AG04450 (cell line): ENCODE measurements at regions of chr19 and their contacts with region 1.

Region 1: GRCh38 chr19:19361075-19361594 is 40.5 kb downstream of the MAU2 start:
- DNase-seq: peak; percentile 58
- H3K4me3 ChIP-seq: no peak overlapping the region
- H3K27ac ChIP-seq: no peak overlapping the region
- H3K27me3 ChIP-seq: no peaks in the 10 kb centered on the region
- CTCF ChIP-seq: peak; percentile 77

Region 2: DNA sequence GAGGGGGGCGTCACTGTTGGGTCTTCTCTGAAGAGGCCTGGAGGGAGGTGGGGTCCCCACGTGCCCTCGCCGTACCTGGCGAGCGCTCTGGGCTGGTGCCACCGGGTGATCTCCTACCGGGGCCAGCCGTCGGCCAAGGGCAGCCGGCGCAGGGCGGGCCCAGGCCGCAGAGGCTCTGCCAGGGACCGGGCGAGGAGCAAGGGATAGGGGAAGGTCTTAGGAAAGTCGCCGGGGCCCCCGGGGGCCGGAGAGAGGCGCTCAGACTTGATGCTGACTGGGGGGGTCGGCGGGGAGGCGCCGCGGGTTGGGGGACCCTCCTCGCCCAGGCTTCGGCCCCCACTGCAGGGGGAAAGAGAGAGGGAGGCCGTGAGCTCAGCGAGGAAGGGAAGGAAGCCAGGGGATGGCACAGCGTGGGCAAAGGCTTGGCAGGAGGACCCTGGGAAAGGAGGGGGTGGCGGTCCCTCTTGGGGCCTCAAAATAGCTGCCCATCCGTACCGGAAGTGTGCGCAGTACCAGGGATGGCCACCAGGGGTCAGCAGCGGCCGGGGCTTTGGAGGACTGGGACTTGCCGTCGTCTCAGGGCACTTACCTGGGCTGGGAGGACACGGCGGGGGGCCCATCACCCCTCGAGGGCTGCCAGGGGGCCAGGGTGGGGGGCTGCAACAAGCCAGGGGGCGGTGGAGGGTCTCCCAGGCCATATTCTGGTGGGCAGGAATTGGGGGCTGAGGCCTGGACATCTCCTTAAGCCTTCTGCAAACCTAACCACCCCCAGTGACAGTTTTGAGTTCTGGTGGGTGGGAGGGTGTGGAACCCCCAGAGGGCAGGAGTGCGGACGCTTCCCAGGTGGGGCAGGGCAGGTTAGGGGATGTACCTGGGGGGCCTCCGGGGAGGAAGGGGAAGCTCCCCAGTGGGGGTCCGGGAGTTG is 215.2 kb before region 1 on chr19:
- CTCF ChIA-PET with region 1: no interaction called
- POLR2A ChIA-PET with region 1: no interaction called
- DNase-seq: peak; percentile 29
- H3K4me3 ChIP-seq: no peak overlapping the region
- H3K27ac ChIP-seq: no peak overlapping the region
- H3K27me3 ChIP-seq: peaks cover 4% of the 10 kb centered on the region
- CTCF ChIP-seq: peak; percentile 91

Region 3: DNA sequence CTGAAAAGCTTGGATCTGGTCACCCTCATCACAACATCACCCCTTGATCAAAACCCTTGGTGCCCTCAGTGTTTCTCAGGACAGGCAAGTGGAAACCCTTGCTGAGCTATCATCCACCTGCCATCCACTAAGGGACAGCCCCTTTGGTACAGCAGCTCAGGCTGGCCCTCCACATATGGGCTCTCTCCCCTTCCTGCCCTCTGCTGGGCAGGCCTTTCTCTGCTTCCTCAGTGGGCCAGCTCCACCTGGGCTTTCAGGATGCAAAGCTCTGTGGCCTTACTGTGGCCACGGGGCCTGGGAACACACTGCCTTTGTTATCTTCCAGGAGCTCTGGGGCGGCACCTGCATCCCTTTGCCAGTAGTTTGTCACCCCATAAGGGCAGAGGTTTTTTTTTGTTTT is 45.7 kb before region 1 on chr19:
- CTCF ChIA-PET with region 1: no interaction called
- POLR2A ChIA-PET with region 1: no interaction called
- DNase-seq: no peak
- H3K4me3 ChIP-seq: no peak overlapping the region
- H3K27ac ChIP-seq: no peak overlapping the region
- H3K27me3 ChIP-seq: no peaks in the 10 kb centered on the region
- CTCF ChIP-seq: no peak

Region 4: GRCh38 chr19:19488875-19489690 is 127.9 kb after region 1 on chr19:
- CTCF ChIA-PET with region 1: interaction called, 147 read pairs
- POLR2A ChIA-PET with region 1: interaction called, 3 read pairs
- DNase-seq: peak; percentile 69
- H3K4me3 ChIP-seq: peak overlapping the region; percentile 25
- H3K27ac ChIP-seq: peak overlapping the region; percentile 90
- H3K27me3 ChIP-seq: no peaks in the 10 kb centered on the region
- CTCF ChIP-seq: no peak